Sciatic nerve (tissue), 2 donors: ENCODE measurements at regions of chr6 and their contacts with region 1.

Region 1: DNA sequence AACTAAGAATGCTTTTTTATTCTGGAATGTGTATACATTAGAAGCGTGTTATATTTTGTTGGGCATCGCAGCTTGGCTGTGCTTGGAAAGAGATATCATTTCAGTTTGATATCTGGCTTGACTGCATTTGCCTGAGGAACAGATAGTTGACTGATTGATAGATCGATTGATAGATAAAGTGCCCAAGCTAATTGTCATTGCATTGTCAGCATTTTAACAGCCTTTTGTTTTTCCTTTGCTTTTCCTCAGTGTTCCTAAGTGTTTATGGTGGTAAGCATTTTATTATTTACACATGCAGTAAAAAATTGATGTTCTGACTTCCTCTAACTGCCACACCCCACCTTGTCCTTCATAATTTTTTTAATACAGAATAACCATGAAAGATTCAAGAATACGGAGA is 180.9 kb upstream of the GRIK2 start:
- DNase-seq: no peak
- ATAC-seq: no peak

Region 2: GRCh38 chr6:99285881-99286280 is 1926.8 kb before region 1 on chr6:
- intact Hi-C with region 1: no loop called
- DNase-seq: no peak
- ATAC-seq: no peak

Region 3: DNA sequence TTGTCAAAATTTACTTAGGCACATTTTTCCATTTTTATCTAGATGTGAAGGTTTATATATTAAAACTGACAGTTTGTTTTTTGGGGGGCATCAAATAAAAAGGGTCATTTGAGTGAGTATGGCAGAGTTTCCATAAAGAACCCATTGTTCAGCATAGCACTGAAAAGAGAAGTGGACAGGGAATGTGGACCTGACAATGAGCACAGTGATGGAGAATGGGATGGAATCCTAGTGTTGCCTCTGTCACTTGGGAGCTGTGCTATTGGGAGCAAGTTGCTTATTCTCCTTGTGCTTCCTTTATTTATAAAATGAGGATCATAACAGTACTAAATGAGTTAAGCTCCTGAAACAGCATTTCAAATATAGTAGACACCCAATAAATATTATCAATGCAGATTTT is 617.2 kb before region 1 on chr6:
- intact Hi-C with region 1: loop called (anchors 5 kb)
- DNase-seq: no peak
- ATAC-seq: no peak

Region 4: DNA sequence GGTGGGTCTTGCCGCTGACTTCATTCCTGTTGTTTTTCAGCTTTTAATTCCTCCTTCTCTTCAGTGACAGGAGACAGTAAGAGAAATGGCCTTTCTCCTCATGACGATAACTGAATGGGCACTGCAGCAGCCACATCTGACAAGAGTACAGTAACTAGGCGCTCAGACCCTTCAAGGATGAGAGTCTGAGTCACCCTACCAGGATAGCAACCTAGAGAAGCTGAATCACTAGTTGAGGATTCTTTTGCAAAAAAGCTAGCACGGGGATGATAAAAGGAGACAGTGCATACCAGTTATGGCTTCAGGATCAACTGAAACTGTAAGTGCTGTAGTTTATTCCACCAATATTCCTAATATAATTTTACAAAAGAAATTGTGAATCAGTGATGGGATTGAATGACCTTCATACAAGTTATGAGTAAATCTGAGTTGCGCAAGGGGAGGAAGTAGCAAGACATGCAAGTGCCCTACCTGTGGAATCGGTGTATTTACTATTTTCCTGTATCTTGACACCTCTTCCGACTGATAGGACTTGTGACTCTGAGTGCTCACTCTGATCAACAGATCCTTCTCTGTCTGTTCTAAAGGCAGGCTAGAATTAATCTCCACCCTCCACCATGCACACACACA is 19.1 kb after region 1 on chr6:
- intact Hi-C with region 1: no loop called
- DNase-seq: no peak
- ATAC-seq: no peak

Region 5: DNA sequence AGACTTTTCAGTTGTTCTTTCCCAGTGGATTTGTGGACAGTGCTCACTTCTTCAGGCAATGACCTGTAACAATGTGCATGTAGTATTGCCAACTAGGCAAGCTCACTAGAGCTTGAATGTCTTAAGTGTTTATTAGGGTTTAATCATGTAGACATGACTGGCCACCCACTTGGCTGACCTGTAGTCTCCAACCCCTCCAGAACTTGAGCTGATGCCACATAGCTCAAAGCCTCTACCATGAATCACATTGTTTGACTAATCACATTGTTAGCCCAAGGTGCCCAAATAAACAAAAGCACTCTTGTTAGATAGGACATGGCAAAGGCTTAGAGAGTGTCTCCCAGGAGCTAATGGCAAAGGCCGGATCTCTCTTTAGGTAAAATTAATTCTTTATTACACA is 453.6 kb after region 1 on chr6:
- intact Hi-C with region 1: no loop called
- DNase-seq: no peak
- ATAC-seq: no peak